ENCODE measurements at regions of chr4 and their contacts with region 1.

Region 1: GRCh38 chr4:185839194-185839712 is 27.3 kb upstream of the SORBS2 start:
- DNase-seq: peak in 1 of 2 donors; percentile 82
- H3K4me3 ChIP-seq: peak overlapping the region in 1 of 2 donors; percentile 16
- H3K27ac ChIP-seq: peak overlapping the region; percentile 59 to 76
- H3K4me1 ChIP-seq: peaks cover 6 to 39% of the 10 kb centered on the region in 2 donors
- H3K27me3 ChIP-seq: no peaks in the 10 kb centered on the region
- CTCF ChIP-seq: no peak

Region 2: DNA sequence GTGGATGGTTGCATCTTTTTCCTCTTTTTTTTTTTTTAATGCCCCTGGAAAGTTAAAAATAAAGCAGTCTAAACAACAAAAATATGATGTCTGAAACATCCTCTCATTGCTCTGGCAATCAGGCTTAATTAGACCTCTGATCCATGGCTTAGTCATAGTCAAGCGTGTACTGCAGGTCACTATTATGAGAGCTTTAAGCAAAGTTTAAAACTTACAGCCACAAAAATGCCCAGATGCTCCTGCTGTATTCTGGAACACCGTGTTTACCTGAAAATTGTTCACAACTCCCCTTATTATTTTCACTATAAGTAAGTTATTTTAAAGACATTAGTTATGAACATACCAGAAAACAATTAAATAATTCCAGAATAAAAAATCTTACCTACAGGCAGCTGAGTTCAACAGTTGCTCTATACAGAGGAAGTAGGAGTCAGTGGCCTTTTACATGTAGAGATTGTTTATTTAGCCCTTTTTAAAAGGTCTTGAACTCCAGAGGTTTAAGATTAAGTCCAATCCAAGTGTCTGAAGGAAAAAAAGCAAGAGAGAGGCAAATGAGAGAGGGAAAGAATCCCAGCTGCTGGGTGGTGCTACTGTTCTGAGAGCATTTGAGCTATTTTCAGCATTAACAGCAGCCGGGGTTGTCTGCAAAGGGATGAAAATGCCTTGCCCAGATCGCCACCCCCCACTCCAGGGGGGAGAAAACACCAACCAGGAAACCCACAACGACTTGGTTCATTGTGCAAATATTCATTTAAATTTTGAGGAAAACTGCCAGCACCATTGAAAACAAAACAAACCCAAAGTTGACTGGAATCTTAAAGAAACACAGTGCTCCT is 64.2 kb before region 1 on chr4:
- intact Hi-C with region 1: loop called (anchors 2 kb)
- DNase-seq: peak in 1 of 2 donors; percentile 76
- H3K4me3 ChIP-seq: peak overlapping the region; percentile 55 to 64
- H3K27ac ChIP-seq: peak overlapping the region; percentile 52 to 81
- H3K4me1 ChIP-seq: peaks cover 0 to 24% of the 10 kb centered on the region in 2 donors
- H3K27me3 ChIP-seq: no peaks in the 10 kb centered on the region
- CTCF ChIP-seq: no peak

Measured in ascending aorta (tissue), 2 donors.